ENCODE measurements at regions of chr7 and their contacts with region 1.

Region 1: GRCh38 chr7:102286237-102287110 is at the start of gene SH2B2:
- DNase-seq: no peak
- ATAC-seq: peak; percentile 30
- H3K4me3 ChIP-seq: peak within 1 kb of the TSS; percentile 80
- H3K27ac ChIP-seq: peak within 1 kb of the TSS; percentile 70
- H3K4me1 ChIP-seq: peaks cover 51% of the 10 kb centered on the region
- H3K27me3 ChIP-seq: no peaks in the 10 kb centered on the region
- CTCF ChIP-seq: no peak
- EP300 ChIP-seq: no peak
- POLR2A ChIP-seq: peak; percentile 67
- RAD21 ChIP-seq: no peak
- polyA plus RNA-seq, gene SH2B2: 0.13 TPM in 1 of 2 experiments, not detected in the other

Region 2: GRCh38 chr7:101564778-101565211 is 721.7 kb before region 1 on chr7:
- CTCF ChIA-PET with region 1: no interaction called
- POLR2A ChIA-PET with region 1: no interaction called
- RAD21 ChIA-PET with region 1: no interaction called
- SMC1A ChIA-PET with region 1: no interaction called
- in situ Hi-C with region 1: no loop called
- intact Hi-C with region 1: no loop called
- DNase-seq: no peak
- ATAC-seq: no peak
- H3K4me3 ChIP-seq: no peak overlapping the region
- H3K27ac ChIP-seq: no peak overlapping the region
- H3K4me1 ChIP-seq: no peaks in the 10 kb centered on the region
- H3K27me3 ChIP-seq: no peaks in the 10 kb centered on the region; a peak in 1 of 4 replicates
- CTCF ChIP-seq: no peak
- EP300 ChIP-seq: no peak
- POLR2A ChIP-seq: no peak
- RAD21 ChIP-seq: no peak

Region 3: DNA sequence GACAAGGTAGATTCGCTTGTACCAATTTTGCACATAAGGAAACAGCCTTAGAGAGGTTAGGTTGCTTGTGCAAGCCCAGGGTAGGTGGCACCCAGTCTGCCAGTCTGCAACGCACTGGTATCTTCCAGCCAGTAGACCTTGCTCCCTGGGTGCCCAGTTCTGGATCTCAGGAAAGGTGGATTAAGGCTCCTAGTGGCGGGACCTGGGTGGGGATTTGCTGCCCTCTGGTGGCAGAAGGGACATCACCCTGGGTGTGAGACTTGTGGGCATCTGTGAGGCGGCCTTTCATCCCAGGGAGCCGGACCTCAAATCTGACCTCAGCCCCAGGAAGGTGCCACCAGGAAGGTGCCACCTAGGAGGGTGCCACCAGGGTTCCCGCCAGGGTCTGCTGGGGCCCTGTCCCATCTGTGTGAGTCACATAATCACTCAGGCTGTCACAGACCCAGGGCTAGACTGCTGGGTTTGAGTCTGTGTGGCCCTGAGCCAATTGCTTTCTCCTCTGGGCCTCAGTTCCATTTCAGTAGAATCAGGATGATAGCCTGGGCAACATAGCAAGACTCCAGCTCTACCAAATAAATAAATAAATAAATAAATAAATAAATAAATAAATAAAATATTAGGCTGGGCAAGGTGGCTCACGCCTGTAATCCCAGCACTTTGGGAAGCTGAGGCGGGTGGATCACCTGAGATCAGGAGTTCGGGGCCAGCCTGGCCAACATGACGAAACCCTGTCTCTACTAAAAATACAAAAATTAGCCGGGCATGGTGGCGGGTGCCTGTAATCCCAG is 104.4 kb after region 1 on chr7:
- CTCF ChIA-PET with region 1: interaction called, 205 read pairs
- POLR2A ChIA-PET with region 1: interaction called, 8 read pairs
- RAD21 ChIA-PET with region 1: interaction called, 24 read pairs
- SMC1A ChIA-PET with region 1: interaction called, 122 read pairs
- in situ Hi-C with region 1: loop called (anchors 5 kb)
- intact Hi-C with region 1: no loop called
- DNase-seq: no peak
- ATAC-seq: peak; percentile 92
- H3K4me3 ChIP-seq: no peak overlapping the region
- H3K27ac ChIP-seq: no peak overlapping the region
- H3K4me1 ChIP-seq: peaks cover 16% of the 10 kb centered on the region
- H3K27me3 ChIP-seq: no peaks in the 10 kb centered on the region
- CTCF ChIP-seq: peak; percentile 89 to 93 (median 91)
- EP300 ChIP-seq: no peak
- POLR2A ChIP-seq: no peak; the same call in 1 of the 2 replicates
- RAD21 ChIP-seq: peak; percentile 91

Region 4: GRCh38 chr7:102396027-102397019 is 109.8 kb after region 1 on chr7 and contains the start of gene PRKRIP1:
- CTCF ChIA-PET with region 1: interaction called, 205 read pairs
- POLR2A ChIA-PET with region 1: interaction called, 8 read pairs
- RAD21 ChIA-PET with region 1: interaction called, 24 read pairs
- SMC1A ChIA-PET with region 1: interaction called, 122 read pairs
- in situ Hi-C with region 1: loop called (anchors 5 kb)
- intact Hi-C with region 1: no loop called
- DNase-seq: peak; percentile 96
- ATAC-seq: peak; percentile 99
- H3K4me3 ChIP-seq: peak within 1 kb of the TSS; percentile 97
- H3K27ac ChIP-seq: peak within 1 kb of the TSS; percentile 88
- H3K4me1 ChIP-seq: peaks cover 10% of the 10 kb centered on the region
- H3K27me3 ChIP-seq: no peaks in the 10 kb centered on the region
- CTCF ChIP-seq: no peak
- EP300 ChIP-seq: peak; percentile 17 to 62; a peak in 1 of 4 replicates
- POLR2A ChIP-seq: peak; percentile 86
- RAD21 ChIP-seq: no peak
- polyA plus RNA-seq, gene PRKRIP1: 17.0 to 18.3 TPM

Region 5: DNA sequence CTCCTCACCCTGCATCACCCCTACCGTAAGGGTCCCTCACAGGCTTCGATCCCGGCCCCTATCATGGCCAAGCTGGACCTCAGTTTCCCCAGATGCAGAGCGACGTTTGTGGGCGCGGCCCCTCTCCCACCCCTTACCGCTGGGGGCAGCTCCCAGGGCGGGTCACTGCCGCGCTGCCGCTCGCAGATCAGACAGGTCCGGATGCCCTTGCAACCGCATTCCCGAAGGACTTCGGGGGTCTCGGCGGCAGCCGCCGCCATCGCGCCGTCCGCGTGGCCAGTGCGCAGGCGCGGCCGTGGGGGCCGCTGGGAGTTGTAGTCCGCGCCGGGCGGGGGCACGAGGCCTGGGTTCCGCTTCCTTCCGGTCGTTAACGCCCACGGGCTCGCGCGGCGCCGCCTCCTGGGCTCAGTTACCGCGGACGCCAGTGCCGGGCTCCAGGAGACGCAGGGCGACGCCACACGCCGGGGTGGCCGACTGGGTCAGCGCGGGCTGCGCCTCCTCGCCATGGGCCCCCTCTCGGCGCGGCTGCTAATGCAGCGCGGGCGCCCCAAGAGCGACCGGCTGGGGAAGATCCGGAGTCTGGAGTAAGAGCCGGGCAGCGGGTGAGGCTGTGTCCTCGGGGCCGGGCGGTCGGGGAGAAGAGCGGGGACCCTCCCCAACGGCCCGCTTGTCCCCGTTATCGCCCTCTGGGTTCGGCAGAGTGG is 178.3 kb after region 1 on chr7 and contains the starts of genes ALKBH4 and LRWD1:
- CTCF ChIA-PET with region 1: interaction called, 4 read pairs
- POLR2A ChIA-PET with region 1: no interaction called
- RAD21 ChIA-PET with region 1: no interaction called
- SMC1A ChIA-PET with region 1: interaction called, 3 read pairs
- in situ Hi-C with region 1: no loop called
- intact Hi-C with region 1: loop called (anchors 5 kb)
- DNase-seq: no peak
- ATAC-seq: peak; percentile 94
- H3K4me3 ChIP-seq: peak within 1 kb of the TSS; percentile 93
- H3K27ac ChIP-seq: peak within 1 kb of the TSS; percentile 89
- H3K4me1 ChIP-seq: peaks cover 15% of the 10 kb centered on the region
- H3K27me3 ChIP-seq: no peaks in the 10 kb centered on the region
- CTCF ChIP-seq: peak in 2 of 3 experiments; percentile 12 to 38; a peak in 4 of 6 replicates
- EP300 ChIP-seq: peak in 1 of 2 experiments; percentile 11; a peak in 1 of 4 replicates
- POLR2A ChIP-seq: peak; percentile 95
- RAD21 ChIP-seq: 0 out of 2 replicates have a peak, but pooled peaks have one; percentile 11
- polyA plus RNA-seq, gene ALKBH4: 4.1 to 9.1 TPM
- polyA plus RNA-seq, gene LRWD1: 0.40 to 2.0 TPM